ENCODE measurements at regions of chr7 and their contacts with region 1.

Region 1: DNA sequence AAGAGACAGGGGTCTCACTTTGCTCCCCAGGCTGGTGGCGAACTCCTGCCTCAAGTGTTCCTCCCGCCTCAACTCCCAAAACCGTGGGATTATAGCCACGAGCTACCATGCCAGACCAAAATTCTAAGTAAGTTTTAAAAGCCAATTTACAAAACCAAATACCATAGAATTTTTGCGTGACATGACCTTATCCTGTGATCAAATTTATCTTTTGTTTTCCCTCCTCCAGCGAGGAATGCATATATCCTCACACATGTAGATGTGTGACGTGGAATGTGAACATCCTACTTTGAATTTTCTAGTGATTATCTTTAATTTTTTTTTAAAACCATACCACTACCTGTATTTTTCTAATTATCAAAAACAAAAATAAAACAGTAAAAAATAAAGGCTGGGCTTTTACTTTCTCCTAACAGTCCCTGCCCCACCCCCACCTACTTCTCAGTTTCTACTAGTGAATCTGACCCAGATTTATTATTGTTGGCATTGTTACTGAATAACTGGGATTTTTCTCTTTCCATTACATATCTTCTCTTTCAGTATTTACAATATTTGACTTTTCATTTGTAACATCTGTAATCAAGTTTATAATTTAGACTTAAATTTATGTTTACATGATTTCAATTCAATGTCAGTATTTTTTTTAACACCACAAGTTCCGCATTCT is 26.0 kb downstream of the CYTH3 start:
- DNase-seq: no peak
- H3K4me3 ChIP-seq: no peak overlapping the region
- H3K27me3 ChIP-seq: no peaks in the 10 kb centered on the region
- CTCF ChIP-seq: no peak

Region 2: DNA sequence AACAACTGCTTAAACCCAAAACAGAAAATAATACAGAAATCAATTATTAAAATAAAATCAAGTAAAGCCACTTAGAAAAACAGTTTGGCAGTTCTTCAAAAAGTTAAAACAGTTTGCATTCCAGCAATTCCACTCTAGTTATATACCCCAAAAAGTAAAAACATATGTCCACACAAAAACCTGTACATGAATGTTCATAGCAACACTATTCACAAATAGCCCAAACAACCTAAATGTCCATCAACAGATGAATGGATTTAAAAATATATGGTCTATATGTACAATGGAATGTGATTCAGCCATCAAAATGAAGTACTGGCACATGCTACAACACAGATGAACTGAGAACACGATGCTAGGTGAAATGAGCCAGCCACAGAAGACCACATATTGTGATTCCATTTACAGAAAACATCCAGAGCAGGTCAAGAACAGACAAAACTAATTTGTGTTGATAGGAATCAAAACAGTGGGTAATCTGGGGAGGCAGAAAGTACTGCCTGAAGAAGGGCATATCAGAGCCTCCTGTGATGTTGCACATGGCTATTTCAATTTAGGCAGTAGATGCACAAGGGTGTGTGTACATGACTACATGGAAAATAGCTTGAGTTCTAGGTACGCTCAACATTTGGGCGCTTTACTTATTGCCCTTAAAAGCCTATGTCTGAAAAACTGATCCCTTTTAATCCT is 40.3 kb before region 1 on chr7:
- CTCF ChIA-PET with region 1: no interaction called
- POLR2A ChIA-PET with region 1: interaction called, 14 read pairs
- DNase-seq: peak; percentile 21
- H3K4me3 ChIP-seq: no peak overlapping the region
- H3K27me3 ChIP-seq: no peaks in the 10 kb centered on the region
- CTCF ChIP-seq: no peak

Region 3: DNA sequence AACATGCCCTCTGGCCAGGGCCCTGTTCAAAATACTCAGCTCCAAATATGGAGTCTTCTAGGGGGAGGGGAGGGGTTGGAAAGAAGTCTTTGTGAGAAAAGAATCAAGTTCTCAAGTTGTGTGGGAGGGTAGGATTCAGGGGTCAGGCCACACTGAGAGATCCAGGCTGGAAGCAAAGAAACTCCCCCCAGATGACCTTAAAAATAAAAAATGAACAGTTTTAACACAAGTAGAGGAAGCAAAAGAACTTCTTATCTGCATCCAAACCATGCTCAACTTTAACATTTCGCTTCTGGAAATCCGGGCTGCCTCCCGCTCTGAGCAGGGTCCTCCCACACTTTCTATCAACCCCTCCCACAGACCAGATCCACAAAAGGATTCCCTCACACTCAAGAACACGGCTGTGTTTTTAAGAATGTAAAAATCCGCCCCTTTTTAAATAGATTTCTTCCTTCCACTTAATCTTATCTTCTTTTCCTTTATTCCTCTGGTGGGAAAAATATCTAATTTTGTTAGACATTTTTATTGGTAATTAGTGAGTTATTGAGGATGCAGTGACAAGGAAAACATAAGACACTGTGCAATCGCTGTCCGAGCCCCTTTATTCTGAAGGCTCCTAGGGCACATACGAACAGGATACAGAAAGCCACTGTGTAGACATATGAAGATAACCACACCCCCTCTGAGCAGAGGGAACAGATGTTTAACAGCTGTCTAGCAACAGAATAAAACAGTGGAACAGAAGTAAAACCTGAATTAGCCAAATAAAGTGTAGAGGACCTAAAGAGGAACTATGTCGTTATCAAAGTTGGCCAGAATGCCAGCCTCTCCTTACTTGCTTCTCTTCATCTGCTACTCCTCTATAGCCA is 17.8 kb before region 1 on chr7:
- CTCF ChIA-PET with region 1: no interaction called
- POLR2A ChIA-PET with region 1: no interaction called
- DNase-seq: peak; percentile 21
- H3K4me3 ChIP-seq: no peak overlapping the region
- H3K27me3 ChIP-seq: no peaks in the 10 kb centered on the region
- CTCF ChIP-seq: no peak